ENCODE measurements at regions of chr1 and their contacts with region 1.

Region 1: DNA sequence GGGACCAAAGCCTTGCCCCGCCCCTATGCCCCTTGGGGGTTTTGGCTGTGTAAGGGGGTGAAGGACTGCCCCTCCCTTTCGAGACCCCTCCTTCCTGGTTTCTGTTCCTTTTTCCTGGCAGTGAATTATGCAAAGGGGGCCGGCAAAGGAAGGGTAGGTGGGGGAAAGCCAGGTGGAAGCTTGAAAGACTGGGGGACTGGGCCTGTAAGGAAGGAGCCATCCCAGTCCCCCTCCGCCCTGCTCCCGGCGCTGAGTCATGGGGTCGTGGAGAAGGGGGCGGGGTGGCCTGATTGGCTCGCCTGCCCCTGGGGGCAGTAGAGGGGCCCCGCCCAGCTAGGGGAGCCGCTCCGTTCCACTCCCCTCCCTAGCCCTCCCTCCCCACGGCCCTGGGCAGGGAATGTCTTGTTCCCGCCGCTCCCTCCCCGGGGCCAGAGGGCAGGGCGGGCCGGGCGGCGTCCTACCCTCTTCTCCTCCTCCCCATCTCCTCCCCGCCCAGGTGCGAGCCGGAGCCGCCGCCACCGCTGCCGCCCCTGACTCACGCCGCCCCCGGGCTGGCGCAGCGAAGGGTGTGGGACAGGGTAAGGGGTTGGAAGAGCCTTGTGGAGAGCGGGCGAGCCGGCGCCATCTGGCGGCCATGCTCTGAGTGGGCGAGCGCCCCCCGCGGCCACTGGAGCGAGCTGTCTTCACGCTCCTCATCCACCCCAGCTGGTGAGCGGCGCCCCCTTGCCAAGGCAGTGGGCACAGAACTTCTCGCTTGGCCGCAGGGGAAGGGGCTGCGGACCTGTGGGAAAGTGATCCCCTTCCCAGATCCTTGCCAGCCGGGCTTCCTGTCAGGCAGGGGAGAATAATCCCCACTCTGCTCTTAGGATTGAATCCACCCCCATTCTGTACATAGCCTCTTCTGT is 14.7 kb downstream of the ZBTB7B start:
- DNase-seq: peak; percentile 97
- H3K4me3 ChIP-seq: peak overlapping the region; percentile 40 to 58 (median 53)
- H3K27ac ChIP-seq: peak overlapping the region; percentile 88 to 92 (median 90)
- H3K4me1 ChIP-seq: peaks cover 0 to 35% (median 26%) of the 10 kb centered on the region in 4 donors
- H3K27me3 ChIP-seq: no peaks in the 10 kb centered on the region
- CTCF ChIP-seq: peak; percentile 99 to 100 (median 100)
- EP300 ChIP-seq: peak in 1 of 4 donors; percentile 74
- POLR2A ChIP-seq: peak in 1 of 2 donors; percentile 39

Region 2: DNA sequence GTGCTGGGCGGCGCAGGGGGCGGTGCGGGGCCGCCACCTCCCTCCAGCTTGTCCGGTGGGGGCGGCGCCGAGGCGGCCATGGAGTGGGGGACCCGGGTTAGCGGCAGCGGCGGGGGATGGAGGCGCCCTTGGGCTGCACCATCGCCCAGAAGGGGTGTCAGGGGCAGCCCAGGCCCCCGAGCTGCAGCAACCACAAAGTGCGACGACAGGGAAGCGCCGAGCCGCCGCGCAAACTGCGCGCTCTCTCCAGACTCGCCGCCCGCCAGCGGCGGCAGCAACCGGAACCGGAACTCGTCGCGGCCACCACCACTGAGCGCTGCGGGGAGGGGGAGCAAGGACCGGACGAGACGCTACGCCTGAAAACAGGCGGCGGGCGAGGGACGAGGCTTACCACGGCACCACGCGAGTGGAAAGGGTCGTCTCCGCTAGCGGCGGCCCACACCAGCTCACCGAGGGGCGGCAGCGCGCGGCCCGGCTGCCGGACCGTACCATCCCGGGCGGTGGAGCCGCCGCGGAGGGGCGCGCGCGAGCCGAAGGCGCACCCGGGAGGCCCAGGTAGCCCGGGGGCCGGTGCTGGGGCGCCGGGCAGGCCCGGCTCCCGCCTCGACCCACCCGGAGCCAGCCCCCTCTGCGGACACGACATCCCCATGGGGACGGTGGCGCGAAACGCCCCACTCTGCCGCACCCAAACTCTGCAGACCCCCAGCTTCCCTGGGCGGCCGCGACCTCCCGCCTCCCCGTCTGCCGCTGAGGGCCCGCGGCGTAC is 55.6 kb before region 1 on chr1 and contains the start of gene PYGO2:
- intact Hi-C with region 1: loop called (anchors 1 kb)
- DNase-seq: peak; percentile 88
- H3K4me3 ChIP-seq: peak within 1 kb of the TSS; percentile 69 to 98 (median 92)
- H3K27ac ChIP-seq: peak within 1 kb of the TSS; percentile 94 to 99 (median 96)
- H3K4me1 ChIP-seq: peaks cover 0 to 43% (median 37%) of the 10 kb centered on the region in 4 donors
- H3K27me3 ChIP-seq: no peaks in the 10 kb centered on the region
- CTCF ChIP-seq: peak in 2 of 4 experiments; percentile 42 to 60
- EP300 ChIP-seq: no peak
- POLR2A ChIP-seq: peak; percentile 59 to 87
- total RNA-seq, gene PYGO2: 15.0 to 23.3 (median 16.6) TPM

Region 3: GRCh38 chr1:155218854-155219591 is 201.7 kb after region 1 on chr1:
- intact Hi-C with region 1: no loop called
- DNase-seq: no peak
- H3K4me3 ChIP-seq: peak overlapping the region in 2 of 4 donors; percentile 16 to 17
- H3K27ac ChIP-seq: peak overlapping the region in 2 of 4 donors; percentile 0 to 5
- H3K4me1 ChIP-seq: peaks cover 0 to 8% (median 5%) of the 10 kb centered on the region in 4 donors
- H3K27me3 ChIP-seq: no peaks in the 10 kb centered on the region
- CTCF ChIP-seq: no peak
- EP300 ChIP-seq: no peak
- POLR2A ChIP-seq: no peak

Region 4: DNA sequence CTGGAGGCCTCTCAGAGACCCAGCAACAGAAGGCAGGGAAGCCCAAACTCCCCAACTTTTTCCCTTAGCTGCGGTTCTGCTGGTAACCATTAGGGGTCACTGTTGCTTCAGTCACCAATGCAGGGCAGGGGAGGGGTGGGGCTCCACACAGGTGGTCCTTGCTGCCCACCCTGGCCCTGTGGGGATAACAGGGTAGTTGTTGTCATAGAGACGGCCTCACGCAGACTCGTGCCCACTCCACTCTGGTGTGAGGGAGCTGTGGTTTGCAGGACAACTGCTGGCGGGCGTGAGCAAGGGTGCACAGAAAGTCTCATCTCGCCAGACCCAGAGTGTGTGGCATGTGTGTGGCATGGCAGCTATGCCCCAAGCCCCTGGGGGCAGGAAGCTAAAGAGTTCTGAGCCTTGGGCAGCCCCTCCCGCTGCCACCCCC is 1821.7 kb after region 1 on chr1:
- intact Hi-C with region 1: no loop called
- DNase-seq: no peak
- H3K4me3 ChIP-seq: no peak overlapping the region
- H3K27ac ChIP-seq: no peak overlapping the region
- H3K4me1 ChIP-seq: no peaks in the 10 kb centered on the region
- H3K27me3 ChIP-seq: peaks cover 0 to 71% (median 10%) of the 10 kb centered on the region in 3 donors
- CTCF ChIP-seq: peak; percentile 36 to 83 (median 66)
- EP300 ChIP-seq: no peak
- POLR2A ChIP-seq: no peak

Measured in sigmoid colon (tissue), 7 donors.